ENCODE measurements at regions of chr20 and their contacts with region 1.

Region 1: GRCh38 chr20:34302723-34303528 is at the start of gene AHCY:
- DNase-seq: peak; percentile 98
- H3K4me3 Mint-ChIP-seq: peak within 1 kb of the TSS; percentile 91
- H3K27ac Mint-ChIP-seq: peak within 1 kb of the TSS; percentile 94
- H3K4me1 Mint-ChIP-seq: peaks cover 18% of the 10 kb centered on the region
- H3K27me3 Mint-ChIP-seq: peaks cover 2% of the 10 kb centered on the region
- total RNA-seq, gene AHCY: 153 and 154 TPM in 2 replicates

Region 2: GRCh38 chr20:34676642-34677373 is 373.9 kb after region 1 on chr20 and contains the start of gene PIGU:
- intact Hi-C with region 1: loop called (anchors 2 kb)
- DNase-seq: peak; percentile 99
- H3K4me3 Mint-ChIP-seq: peak within 1 kb of the TSS; percentile 92
- H3K27ac Mint-ChIP-seq: peak within 1 kb of the TSS; percentile 98
- H3K4me1 Mint-ChIP-seq: peaks cover 25% of the 10 kb centered on the region
- H3K27me3 Mint-ChIP-seq: no peaks in the 10 kb centered on the region
- total RNA-seq, gene PIGU: 26.4 and 27.1 TPM in 2 replicates

Region 3: GRCh38 chr20:34825530-34826362 is 522.8 kb after region 1 on chr20 and contains the start of gene NCOA6:
- intact Hi-C with region 1: loop called (anchors 1 kb)
- DNase-seq: peak; percentile 92
- H3K4me3 Mint-ChIP-seq: peak within 1 kb of the TSS; percentile 95
- H3K27ac Mint-ChIP-seq: peak within 1 kb of the TSS; percentile 93
- H3K4me1 Mint-ChIP-seq: peaks cover 28% of the 10 kb centered on the region
- H3K27me3 Mint-ChIP-seq: peaks cover 11% of the 10 kb centered on the region
- total RNA-seq, gene NCOA6: 25.1 and 26.8 TPM in 2 replicates

Measured in activated CD4-positive, alpha-beta T cell treated with anti-CD3 and anti-CD28 coated beads, Interleukin-2, amount 10 ng/mL, durations not matched to agents 24 days and 14 days (primary cell).